ENCODE measurements at regions of chr19 and their contacts with region 1.

Region 1: GRCh38 chr19:4851551-4852290 is 15.7 kb downstream of the PLIN3 start:
- DNase-seq: peak; percentile 75
- ATAC-seq: peak; percentile 82 to 83

Region 2: GRCh38 chr19:4815426-4816201 is 36.1 kb before region 1 on chr19:
- intact Hi-C with region 1: loop called in 1 of 2 experiments (anchors 2 kb)
- DNase-seq: peak; percentile 93
- ATAC-seq: peak; percentile 90 to 95

Measured in left cardiac atrium (tissue), 4 donors.